Natural killer cell (primary cell): ENCODE measurements at regions of chr12 and their contacts with region 1.

Region 1: GRCh38 chr12:642633-643474 is 20.4 kb downstream of the NINJ2 start:
- DNase-seq: peak; percentile 75 to 90
- ATAC-seq: peak; percentile 81 to 91 (median 90)
- H3K4me3 ChIP-seq: peak overlapping the region; percentile 63
- H3K4me3 Mint-ChIP-seq: peak overlapping the region; percentile 89
- H3K27ac ChIP-seq: peak overlapping the region; percentile 92
- H3K27ac Mint-ChIP-seq: peak overlapping the region; percentile 91 to 94
- H3K4me1 ChIP-seq: peaks cover 28% of the 10 kb centered on the region
- H3K4me1 Mint-ChIP-seq: peaks cover 24 to 45% of the 10 kb centered on the region in 2 donors
- H3K27me3 ChIP-seq: no peaks in the 10 kb centered on the region
- H3K27me3 Mint-ChIP-seq: no peaks in the 10 kb centered on the region
- CTCF ChIP-seq: peak; percentile 33

Region 2: DNA sequence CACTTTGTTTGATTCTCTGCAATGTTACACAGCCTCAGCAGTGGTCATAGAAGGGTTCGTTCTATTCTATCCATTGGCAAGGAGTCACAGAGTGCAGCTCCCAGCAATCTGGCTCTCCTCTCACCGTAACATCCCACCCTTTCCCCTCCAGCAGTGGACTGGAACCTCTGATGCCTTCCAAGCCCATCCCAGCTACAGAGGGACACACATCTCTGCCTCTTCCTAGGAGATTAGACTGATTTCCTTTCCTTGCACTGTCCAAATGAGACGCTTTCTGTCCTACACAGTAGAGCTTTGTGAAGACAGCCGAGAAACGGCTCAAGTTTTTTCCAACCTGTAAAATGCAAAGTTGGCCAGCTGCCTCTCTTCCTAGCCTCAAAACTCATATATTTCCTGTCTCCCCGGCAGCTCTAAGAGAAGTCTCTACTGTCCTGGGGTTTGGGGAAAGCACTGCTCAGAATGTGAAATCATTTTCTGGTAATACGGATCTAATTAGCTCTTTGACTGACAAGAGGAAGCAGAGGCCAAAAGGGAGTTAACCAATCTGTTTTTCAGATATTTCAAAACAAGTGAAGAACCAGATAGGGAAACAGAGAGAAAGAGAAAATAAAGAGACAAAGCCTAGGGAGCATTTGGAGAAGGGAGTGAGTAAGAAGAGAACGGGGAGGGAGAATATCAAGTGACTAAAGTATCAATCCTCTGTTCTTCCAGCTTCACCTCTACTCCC is 19.9 kb after region 1 on chr12:
- intact Hi-C with region 1: no loop called
- DNase-seq: no peak
- ATAC-seq: no peak
- H3K4me3 ChIP-seq: no peak overlapping the region
- H3K4me3 Mint-ChIP-seq: no peak overlapping the region
- H3K27ac ChIP-seq: no peak overlapping the region
- H3K27ac Mint-ChIP-seq: no peak overlapping the region
- H3K4me1 ChIP-seq: peaks cover 5% of the 10 kb centered on the region
- H3K4me1 Mint-ChIP-seq: peaks cover 10 to 20% of the 10 kb centered on the region in 2 donors
- H3K27me3 ChIP-seq: no peaks in the 10 kb centered on the region
- H3K27me3 Mint-ChIP-seq: peaks cover 5 to 6% of the 10 kb centered on the region in 2 donors
- CTCF ChIP-seq: no peak

Region 3: DNA sequence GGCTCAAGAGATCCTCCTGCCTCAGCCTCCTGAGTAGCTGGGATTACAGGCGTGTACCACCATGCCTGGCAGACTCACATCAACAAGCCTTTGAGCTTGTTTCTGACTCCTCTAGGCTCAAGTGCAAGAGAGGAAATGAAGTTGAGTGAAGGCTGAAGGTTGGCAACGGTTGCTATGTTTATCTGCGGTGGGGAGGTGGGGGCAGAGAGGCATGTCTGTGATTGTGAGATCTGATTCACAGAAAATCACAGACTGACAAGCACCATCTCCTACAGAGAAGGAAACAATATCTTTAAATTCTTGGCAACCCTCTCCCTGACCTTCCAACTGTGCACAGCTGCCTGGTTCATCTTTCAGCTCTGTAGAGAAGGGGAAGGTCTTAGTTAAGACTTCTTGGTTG is 42.5 kb after region 1 on chr12:
- intact Hi-C with region 1: loop called (anchors 5 kb)
- DNase-seq: peak; percentile 78 to 95
- ATAC-seq: peak; percentile 88 to 98 (median 93)
- H3K4me3 ChIP-seq: no peak overlapping the region
- H3K4me3 Mint-ChIP-seq: peak overlapping the region; percentile 59
- H3K27ac ChIP-seq: peak overlapping the region; percentile 88
- H3K27ac Mint-ChIP-seq: peak overlapping the region; percentile 87 to 96
- H3K4me1 ChIP-seq: peaks cover 28% of the 10 kb centered on the region
- H3K4me1 Mint-ChIP-seq: peaks cover 19 to 30% of the 10 kb centered on the region in 2 donors
- H3K27me3 ChIP-seq: no peaks in the 10 kb centered on the region
- H3K27me3 Mint-ChIP-seq: no peaks in the 10 kb centered on the region
- CTCF ChIP-seq: no peak